Endothelial cell of umbilical vein (primary cell): ENCODE measurements at regions of chr2 and their contacts with region 1.

Region 1: DNA sequence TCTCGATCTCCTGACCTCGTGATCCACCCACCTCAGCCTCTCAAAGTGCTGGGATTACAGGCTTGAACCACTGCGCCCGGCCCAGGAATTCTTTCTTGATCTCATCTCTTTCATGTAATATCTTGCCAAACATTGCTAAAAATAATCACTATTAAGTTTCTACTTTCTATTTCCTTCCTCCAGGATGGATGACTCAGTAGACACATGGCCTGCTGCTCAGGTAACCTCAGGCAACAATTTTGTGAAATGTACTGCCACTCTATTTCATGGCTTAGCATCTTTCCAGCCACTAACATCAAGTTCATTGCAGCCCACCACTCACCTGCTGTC is 11.1 kb upstream of the SUMO1 start:
- DNase-seq: peak; percentile 46
- H3K4me3 ChIP-seq: no peak overlapping the region
- H3K27ac ChIP-seq: peak overlapping the region; percentile 8
- H3K4me1 ChIP-seq: peaks cover 17% of the 10 kb centered on the region
- H3K27me3 ChIP-seq: no peaks in the 10 kb centered on the region
- CTCF ChIP-seq: no peak
- POLR2A ChIP-seq: no peak

Region 2: GRCh38 chr2:201406077-201406662 is 843.3 kb before region 1 on chr2:
- CTCF ChIA-PET with region 1: no interaction called
- POLR2A ChIA-PET with region 1: no interaction called
- dilution Hi-C with region 1: no loop called
- intact Hi-C with region 1: no loop called
- DNase-seq: peak; percentile 63
- H3K4me3 ChIP-seq: no peak overlapping the region
- H3K27ac ChIP-seq: no peak overlapping the region
- H3K4me1 ChIP-seq: peaks cover 8% of the 10 kb centered on the region
- H3K27me3 ChIP-seq: no peaks in the 10 kb centered on the region
- CTCF ChIP-seq: no peak
- POLR2A ChIP-seq: no peak

Region 3: GRCh38 chr2:202238234-202239197 is 11.0 kb before region 1 on chr2 and contains the start of gene SUMO1:
- CTCF ChIA-PET with region 1: interaction called, 4 read pairs
- POLR2A ChIA-PET with region 1: no interaction called
- dilution Hi-C with region 1: no loop called
- intact Hi-C with region 1: loop called (anchors 1 kb)
- DNase-seq: peak; percentile 91
- H3K4me3 ChIP-seq: peak within 1 kb of the TSS; percentile 78 to 86 (median 82)
- H3K27ac ChIP-seq: peak within 1 kb of the TSS; percentile 65
- H3K4me1 ChIP-seq: peaks cover 15% of the 10 kb centered on the region
- H3K27me3 ChIP-seq: no peaks in the 10 kb centered on the region
- CTCF ChIP-seq: no peak
- POLR2A ChIP-seq: peak; percentile 73
- total RNA-seq, gene SUMO1: 102 and 105 TPM in 2 replicates